Activated naive CD4-positive, alpha-beta T cell treated with anti-CD3 and anti-CD28 coated beads for 36 hours (primary cell): ENCODE measurements at regions of chr4 and their contacts with region 1.

Region 1: GRCh38 chr4:100591161-100591876 is 73.5 kb upstream of the EMCN start:
- DNase-seq: no peak
- H3K4me3 Mint-ChIP-seq: no peak overlapping the region
- H3K27ac Mint-ChIP-seq: no peak overlapping the region
- H3K4me1 Mint-ChIP-seq: peaks cover 2% of the 10 kb centered on the region
- H3K27me3 Mint-ChIP-seq: peaks cover 3% of the 10 kb centered on the region

Region 2: GRCh38 chr4:100517864-100518341 is 73.4 kb before region 1 on chr4 and contains the start of gene EMCN:
- CTCF ChIA-PET with region 1: no interaction called
- intact Hi-C with region 1: no loop called
- DNase-seq: no peak
- H3K4me3 Mint-ChIP-seq: no peak within 1 kb of the TSS
- H3K27ac Mint-ChIP-seq: no peak within 1 kb of the TSS
- H3K4me1 Mint-ChIP-seq: no peaks in the 10 kb centered on the region
- H3K27me3 Mint-ChIP-seq: peaks cover 18% of the 10 kb centered on the region
- total RNA-seq, gene EMCN: not detected

Region 3: GRCh38 chr4:100569196-100569595 is 22.1 kb before region 1 on chr4:
- CTCF ChIA-PET with region 1: no interaction called
- intact Hi-C with region 1: loop called (anchors 2 kb)
- DNase-seq: peak; percentile 26
- H3K4me3 Mint-ChIP-seq: no peak overlapping the region
- H3K27ac Mint-ChIP-seq: peak overlapping the region; percentile 59
- H3K4me1 Mint-ChIP-seq: peaks cover 21% of the 10 kb centered on the region
- H3K27me3 Mint-ChIP-seq: peaks cover 2% of the 10 kb centered on the region

Region 4: DNA sequence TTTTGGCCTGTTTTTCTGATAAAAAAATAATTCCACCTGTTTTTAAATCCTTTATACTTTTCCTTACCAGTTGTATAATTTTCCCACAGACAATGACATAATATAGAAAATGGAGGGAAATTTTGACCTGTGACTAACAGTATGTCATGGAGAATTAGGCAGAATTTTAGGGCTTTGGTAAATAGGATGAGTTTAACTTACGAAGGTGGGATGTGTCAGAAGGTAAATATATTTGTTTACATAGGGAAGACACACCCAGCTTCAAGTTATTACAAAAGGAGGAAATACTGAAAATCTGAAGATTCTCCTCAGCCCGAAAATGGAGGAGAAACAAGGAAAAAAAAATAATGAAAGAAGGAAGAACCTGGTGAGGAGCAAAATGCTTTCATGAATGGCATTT is 820.6 kb after region 1 on chr4:
- CTCF ChIA-PET with region 1: no interaction called
- intact Hi-C with region 1: no loop called
- DNase-seq: no peak
- H3K4me3 Mint-ChIP-seq: no peak overlapping the region
- H3K27ac Mint-ChIP-seq: no peak overlapping the region
- H3K4me1 Mint-ChIP-seq: peaks cover 4% of the 10 kb centered on the region
- H3K27me3 Mint-ChIP-seq: peaks cover 34% of the 10 kb centered on the region